ENCODE measurements at regions of chr16 and their contacts with region 1.

Region 1: GRCh38 chr16:75413951-75414350 is 19.4 kb downstream of the CFDP1 start:
- DNase-seq: no peak
- H3K4me3 ChIP-seq: no peak overlapping the region
- H3K27ac ChIP-seq: no peak overlapping the region
- H3K4me1 ChIP-seq: no peaks in the 10 kb centered on the region
- H3K27me3 ChIP-seq: no peaks in the 10 kb centered on the region
- CTCF ChIP-seq: no peak

Region 2: DNA sequence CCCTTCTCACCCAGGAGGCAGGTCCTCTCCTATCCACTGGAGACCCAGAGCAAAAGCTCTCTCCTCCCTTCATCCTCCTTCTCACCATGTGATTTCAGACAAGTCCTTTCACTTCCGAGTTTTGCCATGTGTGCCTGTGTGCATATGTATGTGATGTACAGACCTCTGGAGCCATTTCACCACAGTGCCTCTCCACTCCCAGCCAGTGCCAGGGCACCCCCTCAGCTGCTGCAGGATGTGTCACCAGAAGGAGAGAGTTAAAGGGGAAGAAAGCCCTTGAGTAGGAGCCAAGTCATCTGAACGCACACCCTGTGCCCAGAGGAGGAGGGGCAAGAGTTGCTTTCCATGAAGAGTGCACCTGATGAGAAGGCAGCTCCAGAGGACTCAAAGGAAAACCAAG is 64.1 kb after region 1 on chr16:
- CTCF ChIA-PET with region 1: no interaction called
- dilution Hi-C with region 1: loop called (anchors 5 kb)
- in situ Hi-C with region 1: no loop called
- intact Hi-C with region 1: no loop called
- DNase-seq: peak; percentile 52
- H3K4me3 ChIP-seq: no peak overlapping the region
- H3K27ac ChIP-seq: no peak overlapping the region
- H3K4me1 ChIP-seq: peaks cover 33% of the 10 kb centered on the region
- H3K27me3 ChIP-seq: no peaks in the 10 kb centered on the region
- CTCF ChIP-seq: no peak

Measured in mammary epithelial cell (primary cell).